HepG2 (cell line): ENCODE measurements at regions of chr2 and their contacts with region 1.

Region 1: DNA sequence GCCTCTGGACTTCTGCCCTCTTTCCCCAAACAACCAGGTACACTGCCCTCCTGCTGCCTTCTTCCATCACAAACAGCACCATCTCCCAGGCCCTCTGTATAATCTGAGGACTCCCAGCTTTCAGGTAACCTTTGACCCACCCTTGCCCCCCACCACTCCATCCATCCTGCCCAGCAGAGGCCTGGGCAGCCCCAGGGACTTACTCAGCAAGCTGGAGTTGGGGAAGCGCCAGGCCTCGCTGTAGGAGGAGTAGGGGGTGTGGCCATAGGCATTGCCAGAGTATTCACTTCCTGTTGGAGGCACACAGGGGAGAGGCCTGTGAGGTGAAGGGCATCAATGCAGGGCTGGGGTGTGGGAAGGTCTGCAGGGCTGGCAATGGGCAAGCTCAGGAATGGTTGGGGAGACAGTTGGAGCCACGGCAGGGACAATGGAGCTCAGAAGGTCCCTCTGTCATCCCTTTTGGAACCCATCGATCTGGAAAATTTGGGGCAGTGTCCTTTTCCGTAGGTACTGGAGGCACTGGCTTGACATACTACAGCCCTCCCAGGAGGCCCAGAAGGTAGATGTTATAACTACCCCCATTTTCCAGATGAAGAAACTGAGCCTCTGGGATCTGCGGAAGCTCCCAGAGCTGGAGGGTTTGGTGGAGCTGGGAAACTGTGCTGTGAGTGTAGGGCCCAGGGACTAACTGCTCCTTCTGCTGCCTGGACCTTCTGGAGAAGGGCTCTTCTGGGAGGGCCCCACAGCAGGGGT is 46.3 kb downstream of the PSD4 start:
- DNase-seq: peak; percentile 85
- ATAC-seq: peak; percentile 72
- H3K4me3 ChIP-seq: peak overlapping the region; percentile 52 to 70 (median 60)
- H3K27ac ChIP-seq: peak overlapping the region; percentile 97
- H3K4me1 ChIP-seq: peaks cover 80% of the 10 kb centered on the region
- H3K27me3 ChIP-seq: no peaks in the 10 kb centered on the region; a peak in 1 of 5 replicates
- CTCF ChIP-seq: 0 out of 2 replicates have a peak, but pooled peaks have one; percentile 3
- EP300 ChIP-seq: peak in 1 of 2 experiments; percentile 61; a peak in 1 of 4 replicates
- POLR2A ChIP-seq: peak; percentile 77 to 96
- RAD21 ChIP-seq: no peak; the same call in 1 of the 2 replicates

Region 2: DNA sequence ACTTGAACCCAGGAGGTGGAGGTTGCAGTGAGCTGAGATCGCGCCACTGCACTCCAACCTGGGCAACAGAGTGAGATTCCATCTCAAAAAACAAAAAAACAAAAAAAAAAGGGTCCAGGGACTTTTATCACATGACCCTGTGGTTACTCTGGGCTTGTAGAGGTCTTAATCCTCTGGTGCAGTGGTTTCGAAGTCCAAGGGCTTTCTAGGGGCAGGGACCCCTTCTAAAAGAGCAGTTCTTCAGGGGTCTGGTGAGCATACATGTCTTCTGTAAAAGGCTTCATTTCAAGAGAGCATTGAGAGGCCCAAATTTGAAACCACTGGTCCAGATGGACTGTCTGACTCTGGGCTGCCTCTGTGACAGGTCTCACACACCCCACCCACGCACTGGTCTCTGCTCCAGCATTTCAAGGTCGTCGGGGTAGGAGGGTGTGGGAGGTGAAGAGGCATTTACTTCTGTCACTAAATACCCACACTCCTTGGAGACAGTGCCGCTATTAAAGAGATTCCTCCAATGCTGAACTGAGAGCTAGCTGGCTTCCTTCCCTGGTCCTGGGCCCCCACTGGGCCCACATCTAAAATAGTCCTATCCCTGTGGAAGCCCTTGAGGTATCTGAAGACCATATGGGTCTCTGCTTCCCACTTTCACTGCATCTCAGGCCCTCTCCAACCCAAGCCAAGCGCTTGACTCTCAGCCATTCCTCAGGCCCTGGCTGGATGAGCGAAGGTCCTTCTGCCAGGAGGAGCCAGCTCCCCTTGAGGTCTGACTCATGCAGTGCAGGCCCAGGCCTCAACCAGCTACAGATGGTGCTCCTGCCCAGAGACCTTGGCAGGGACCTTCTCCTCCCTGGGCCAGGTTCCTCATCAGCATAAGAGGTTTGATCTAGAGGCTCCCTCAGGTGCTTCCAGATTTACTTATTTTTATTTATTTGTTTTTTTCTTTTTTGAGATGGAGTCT is 13.8 kb after region 1 on chr2:
- CTCF ChIA-PET with region 1: interaction called, 3 read pairs
- POLR2A ChIA-PET with region 1: interaction called, 19 read pairs
- in situ Hi-C with region 1: no loop called
- intact Hi-C with region 1: loop called (anchors 2 kb)
- DNase-seq: peak; percentile 32
- ATAC-seq: peak; percentile 94
- H3K4me3 ChIP-seq: 0 out of 6 replicates have a peak overlapping the region, but pooled peaks of 2 of the 3 experiments have one; percentile 1 to 17
- H3K27ac ChIP-seq: no peak overlapping the region
- H3K4me1 ChIP-seq: peaks cover 59% of the 10 kb centered on the region
- H3K27me3 ChIP-seq: 0 out of 5 replicates have a peak, but pooled peaks cover 0 to 5% of the 10 kb centered on the region in 2 experiments
- CTCF ChIP-seq: peak; percentile 49
- EP300 ChIP-seq: no peak
- POLR2A ChIP-seq: no peak
- RAD21 ChIP-seq: 0 out of 2 replicates have a peak, but pooled peaks have one; percentile 9

Region 3: DNA sequence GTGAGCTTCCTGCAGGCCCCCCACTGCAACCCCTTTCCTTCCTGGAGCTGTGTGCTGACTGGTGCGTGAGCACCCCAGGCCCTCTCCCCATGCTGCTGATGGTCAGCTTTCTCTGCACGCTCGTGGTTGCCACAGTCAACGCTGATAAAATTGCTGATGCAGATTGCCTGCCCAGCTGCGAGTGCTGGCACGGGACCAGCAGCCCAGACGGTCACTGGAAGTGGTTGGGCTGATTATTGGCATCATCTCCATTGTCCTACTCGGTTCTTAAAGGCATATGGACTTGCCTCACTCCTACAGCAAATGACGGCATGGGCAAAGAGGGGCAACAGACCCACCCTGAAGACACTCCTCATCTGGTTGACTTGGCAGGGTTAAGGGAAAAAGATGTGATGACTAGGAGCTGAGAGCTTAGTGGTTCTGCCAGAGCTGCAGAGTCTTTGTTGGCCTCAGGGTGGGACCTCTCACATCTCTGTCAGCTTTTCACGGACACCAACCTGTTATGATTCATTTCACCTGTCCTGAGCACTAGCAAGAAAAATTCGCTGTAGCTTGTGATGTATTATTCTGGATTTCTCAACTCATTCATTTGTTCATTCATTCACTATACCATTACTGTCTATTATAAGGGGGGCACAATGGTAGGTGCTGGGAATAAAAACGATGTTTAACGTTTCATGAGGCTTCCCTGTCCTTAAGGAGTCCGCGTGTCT is 20.2 kb after region 1 on chr2:
- CTCF ChIA-PET with region 1: no interaction called
- POLR2A ChIA-PET with region 1: interaction called, 24 read pairs
- in situ Hi-C with region 1: no loop called
- intact Hi-C with region 1: loop called (anchors 2 kb)
- DNase-seq: no peak
- ATAC-seq: peak; percentile 31
- H3K4me3 ChIP-seq: 0 out of 6 replicates have a peak overlapping the region, but pooled peaks of 1 of the 3 experiments have one; percentile 23
- H3K27ac ChIP-seq: no peak overlapping the region
- H3K4me1 ChIP-seq: peaks cover 68% of the 10 kb centered on the region
- H3K27me3 ChIP-seq: no peaks in the 10 kb centered on the region; a peak in 1 of 5 replicates
- CTCF ChIP-seq: no peak
- EP300 ChIP-seq: no peak
- POLR2A ChIP-seq: no peak
- RAD21 ChIP-seq: no peak

Region 4: GRCh38 chr2:113257516-113258264 is 37.6 kb after region 1 on chr2:
- CTCF ChIA-PET with region 1: no interaction called
- POLR2A ChIA-PET with region 1: no interaction called
- in situ Hi-C with region 1: no loop called
- intact Hi-C with region 1: no loop called
- DNase-seq: no peak
- ATAC-seq: no peak
- H3K4me3 ChIP-seq: no peak overlapping the region
- H3K27ac ChIP-seq: no peak overlapping the region
- H3K4me1 ChIP-seq: no peaks in the 10 kb centered on the region
- H3K27me3 ChIP-seq: peaks cover 0 to 24% of the 10 kb centered on the region in 2 experiments; a peak in 3 of 5 replicates
- CTCF ChIP-seq: no peak
- EP300 ChIP-seq: no peak
- POLR2A ChIP-seq: no peak
- RAD21 ChIP-seq: no peak

Region 5: GRCh38 chr2:113282747-113283533 is 62.9 kb after region 1 on chr2:
- CTCF ChIA-PET with region 1: no interaction called
- POLR2A ChIA-PET with region 1: interaction called, 5 read pairs
- in situ Hi-C with region 1: no loop called
- intact Hi-C with region 1: loop called (anchors 5 kb)
- DNase-seq: peak; percentile 91
- ATAC-seq: peak; percentile 91
- H3K4me3 ChIP-seq: peak overlapping the region; percentile 22 to 61 (median 37); a peak in 5 of 6 replicates
- H3K27ac ChIP-seq: peak overlapping the region; percentile 90
- H3K4me1 ChIP-seq: peaks cover 82% of the 10 kb centered on the region
- H3K27me3 ChIP-seq: no peaks in the 10 kb centered on the region
- CTCF ChIP-seq: peak; percentile 66
- EP300 ChIP-seq: peak; percentile 63 to 89; a peak in 3 of 4 replicates
- POLR2A ChIP-seq: peak; percentile 70 to 77
- RAD21 ChIP-seq: peak; percentile 50